ENCODE measurements at regions of chr20 and their contacts with region 1.

Region 1: GRCh38 chr20:51767010-51767558 is 1.1 kb downstream of the ATP9A start:
- DNase-seq: peak; percentile 60 to 98 (median 84)

Region 2: DNA sequence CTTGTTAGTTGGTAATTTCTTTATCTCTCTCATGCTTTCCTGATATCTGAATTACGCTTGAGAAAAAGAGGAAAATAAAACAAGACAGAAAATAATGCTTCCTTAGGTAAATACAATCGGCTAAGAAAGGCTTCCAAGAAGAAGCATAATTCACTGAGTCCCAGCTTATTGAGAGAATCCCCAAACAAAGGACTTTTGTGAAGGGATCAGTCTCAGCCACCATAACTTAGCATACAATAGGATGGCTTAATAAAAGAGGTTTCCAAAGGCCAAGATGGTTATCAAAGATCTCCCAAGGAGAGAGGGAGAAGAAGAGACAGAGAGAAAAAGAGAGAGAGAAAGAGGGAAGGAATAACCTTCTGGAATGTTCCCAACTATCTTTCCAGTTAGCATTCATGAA is 81.3 kb after region 1 on chr20:
- intact Hi-C with region 1: no loop called
- DNase-seq: no peak

Region 3: DNA sequence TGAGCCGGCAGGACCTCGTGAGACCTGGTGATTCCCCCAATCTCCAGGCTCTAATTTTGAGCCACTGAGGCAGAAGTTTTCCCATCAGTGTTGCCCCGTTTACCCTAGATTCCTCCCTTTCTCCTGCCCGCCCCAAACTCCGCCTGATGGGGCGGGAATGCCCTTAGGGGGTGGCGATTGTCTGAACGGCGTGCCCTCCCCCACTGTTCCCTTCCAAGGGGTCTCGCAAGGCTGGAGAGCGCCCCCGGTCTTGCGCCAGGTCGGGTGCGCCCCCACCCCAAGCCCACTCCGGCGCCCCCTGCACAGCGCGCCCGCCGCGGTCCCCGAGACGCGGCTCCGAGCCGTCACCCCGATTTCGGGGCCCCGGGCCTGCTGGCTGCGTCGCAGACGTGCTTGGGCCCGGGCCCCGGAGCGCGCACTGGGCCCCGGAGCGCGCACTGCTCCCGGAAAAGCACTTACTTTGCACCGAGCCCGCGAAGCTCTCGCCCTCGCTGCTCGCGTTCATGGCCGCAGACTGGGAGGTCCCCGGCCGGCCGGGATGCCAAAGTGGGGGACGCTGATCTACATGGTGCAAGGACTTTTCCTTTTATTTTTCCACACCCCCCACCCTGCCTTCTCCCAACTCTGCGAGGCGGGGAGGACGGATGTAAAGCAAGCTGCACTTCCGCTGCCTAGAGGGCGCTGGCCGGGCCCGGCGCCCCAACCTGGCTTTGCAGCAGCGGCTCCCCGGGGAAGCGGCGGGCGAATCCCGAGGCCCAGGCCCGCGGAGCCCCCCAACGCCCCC is 424.2 kb after region 1 on chr20 and contains the start of gene ZFP64:
- intact Hi-C with region 1: loop called (anchors 10 kb)
- DNase-seq: peak; percentile 74 to 97 (median 84)